ENCODE measurements at regions of chr3 and their contacts with region 1.

Region 1: DNA sequence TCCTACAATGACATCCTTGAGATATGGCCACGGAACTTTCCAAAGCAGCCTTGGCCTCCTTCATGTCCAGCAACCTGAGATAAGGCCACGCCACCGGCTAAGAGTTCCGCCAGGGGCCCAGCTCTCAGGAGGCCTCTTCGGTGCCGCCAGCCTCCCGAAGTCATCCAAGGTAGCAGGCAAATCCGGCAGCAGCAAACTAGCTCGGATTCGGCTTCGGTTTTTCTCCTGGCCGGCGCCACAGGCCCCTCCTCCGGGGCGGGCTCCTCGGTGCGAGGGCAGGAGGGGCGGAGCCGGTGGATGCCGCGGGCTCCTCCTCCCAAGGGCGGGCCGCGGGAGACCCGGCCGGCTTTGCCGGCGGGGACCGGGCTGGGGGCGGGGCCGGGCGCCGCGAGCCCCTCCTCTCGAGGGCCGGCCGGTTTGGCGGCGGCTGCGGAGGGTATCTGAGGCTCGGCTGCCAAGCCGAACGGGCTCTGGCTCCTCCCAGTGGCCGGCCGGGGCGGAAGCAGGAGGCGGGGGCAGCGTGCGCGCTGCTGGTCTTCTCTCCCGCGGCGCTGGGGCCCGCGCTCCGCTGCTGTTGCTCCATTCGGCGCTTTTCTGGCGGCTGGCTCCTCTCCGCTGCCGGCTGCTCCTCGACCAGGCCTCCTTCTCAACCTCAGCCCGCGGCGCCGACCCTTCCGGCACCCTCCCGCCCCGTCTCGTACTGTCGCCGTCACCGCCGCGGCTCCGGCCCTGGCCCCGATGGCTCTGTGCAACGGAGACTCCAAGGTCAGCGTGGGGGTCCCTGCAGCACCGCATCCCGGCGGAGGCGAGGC is at the start of gene GMPS:
- DNase-seq: peak; percentile 87 to 98 (median 95)
- ATAC-seq: peak; percentile 91
- H3K4me3 ChIP-seq: peak within 1 kb of the TSS; percentile 69
- H3K4me3 Mint-ChIP-seq: peak within 1 kb of the TSS; percentile 97
- H3K27ac ChIP-seq: peak within 1 kb of the TSS; percentile 79 to 86
- H3K27ac Mint-ChIP-seq: peak within 1 kb of the TSS; percentile 95
- H3K4me1 ChIP-seq: peaks cover 23% of the 10 kb centered on the region
- H3K4me1 Mint-ChIP-seq: peaks cover 32% of the 10 kb centered on the region
- H3K27me3 ChIP-seq: no peaks in the 10 kb centered on the region
- H3K27me3 Mint-ChIP-seq: no peaks in the 10 kb centered on the region
- CTCF ChIP-seq: peak; percentile 47
- total RNA-seq, gene GMPS: 34.1 to 34.3 TPM

Region 2: DNA sequence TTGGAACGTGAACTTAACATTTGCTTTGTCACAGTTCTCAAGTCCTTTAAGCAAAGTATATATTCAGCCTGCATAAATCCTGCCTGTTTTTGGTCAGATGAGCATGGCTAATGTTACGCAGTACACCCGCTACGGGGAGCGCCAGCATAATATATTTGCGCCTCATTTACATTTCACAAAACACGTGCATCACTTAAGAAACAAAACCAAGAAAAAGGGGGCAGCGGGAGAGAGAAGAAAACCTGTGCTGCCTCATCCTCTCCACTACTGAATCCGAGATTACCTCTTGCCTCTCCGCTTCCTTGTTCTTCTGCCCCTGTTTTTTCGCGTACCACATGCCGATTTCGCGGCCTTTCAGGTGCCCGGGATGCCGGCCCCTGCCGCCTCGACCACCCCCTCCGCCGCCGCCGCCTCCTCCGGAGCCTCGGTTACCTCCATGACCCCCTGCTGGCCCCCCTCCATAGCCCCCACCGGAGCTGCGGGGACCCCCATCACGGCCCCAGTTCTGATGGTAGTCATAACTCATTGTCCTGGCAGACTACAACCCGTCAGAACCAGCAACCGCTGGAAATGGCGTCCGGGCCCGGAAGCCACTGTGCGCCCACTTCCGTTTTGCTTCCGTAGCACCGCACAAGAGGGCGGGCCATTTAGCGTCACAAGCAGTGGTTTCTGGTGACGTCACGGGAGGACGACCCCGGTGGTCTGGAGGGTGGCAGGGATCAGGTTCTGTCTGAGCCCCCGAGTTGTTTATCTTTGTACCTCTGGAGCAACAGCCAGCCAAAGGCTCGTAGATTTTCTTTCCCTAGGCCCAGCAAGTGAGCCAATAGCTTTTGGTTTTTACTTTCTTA is 1546.2 kb before region 1 on chr3 and contains the start of gene DHX36:
- CTCF ChIA-PET with region 1: no interaction called
- POLR2A ChIA-PET with region 1: no interaction called
- intact Hi-C with region 1: loop called (anchors 1 to 5 kb)
- DNase-seq: peak; percentile 77 to 95 (median 86)
- ATAC-seq: peak; percentile 89
- H3K4me3 ChIP-seq: peak within 1 kb of the TSS; percentile 84
- H3K4me3 Mint-ChIP-seq: peak within 1 kb of the TSS; percentile 96
- H3K27ac ChIP-seq: peak within 1 kb of the TSS; percentile 96 to 97
- H3K27ac Mint-ChIP-seq: peak within 1 kb of the TSS; percentile 99
- H3K4me1 ChIP-seq: peaks cover 39% of the 10 kb centered on the region
- H3K4me1 Mint-ChIP-seq: peaks cover 16% of the 10 kb centered on the region
- H3K27me3 ChIP-seq: no peaks in the 10 kb centered on the region
- H3K27me3 Mint-ChIP-seq: no peaks in the 10 kb centered on the region
- CTCF ChIP-seq: no peak
- total RNA-seq, gene DHX36: 128 TPM

Region 3: GRCh38 chr3:155744626-155745324 is 125.6 kb before region 1 on chr3 and contains the start of gene PLCH1:
- CTCF ChIA-PET with region 1: no interaction called
- POLR2A ChIA-PET with region 1: no interaction called
- intact Hi-C with region 1: loop called in 1 of 2 experiments (anchors 5 kb)
- DNase-seq: peak in 13 of 14 experiments; percentile 8 to 63 (median 34)
- ATAC-seq: peak; percentile 80
- H3K4me3 ChIP-seq: peak within 1 kb of the TSS; percentile 72
- H3K4me3 Mint-ChIP-seq: peak within 1 kb of the TSS; percentile 94
- H3K27ac ChIP-seq: no peak within 1 kb of the TSS
- H3K27ac Mint-ChIP-seq: peak within 1 kb of the TSS; percentile 60
- H3K4me1 ChIP-seq: peaks cover 23% of the 10 kb centered on the region
- H3K4me1 Mint-ChIP-seq: peaks cover 30% of the 10 kb centered on the region
- H3K27me3 ChIP-seq: peaks cover 20 to 33% of the 10 kb centered on the region in 2 experiments
- H3K27me3 Mint-ChIP-seq: peaks cover 54% of the 10 kb centered on the region
- CTCF ChIP-seq: no peak
- total RNA-seq, gene PLCH1: 0.03 to 0.20 TPM

Region 4: GRCh38 chr3:155854141-155854940 is 16.0 kb before region 1 on chr3 and contains the start of gene SLC33A1:
- CTCF ChIA-PET with region 1: interaction called, 11 read pairs
- POLR2A ChIA-PET with region 1: interaction called, 75 read pairs
- intact Hi-C with region 1: loop called (anchors 1 kb)
- DNase-seq: peak; percentile 96 to 100 (median 98)
- ATAC-seq: peak; percentile 90
- H3K4me3 ChIP-seq: peak within 1 kb of the TSS; percentile 93
- H3K4me3 Mint-ChIP-seq: peak within 1 kb of the TSS; percentile 97
- H3K27ac ChIP-seq: peak within 1 kb of the TSS; percentile 74 to 98
- H3K27ac Mint-ChIP-seq: peak within 1 kb of the TSS; percentile 98
- H3K4me1 ChIP-seq: peaks cover 52% of the 10 kb centered on the region
- H3K4me1 Mint-ChIP-seq: peaks cover 47% of the 10 kb centered on the region
- H3K27me3 ChIP-seq: no peaks in the 10 kb centered on the region
- H3K27me3 Mint-ChIP-seq: no peaks in the 10 kb centered on the region
- CTCF ChIP-seq: peak; percentile 2
- total RNA-seq, gene SLC33A1: 14.6 to 16.4 TPM

Region 5: GRCh38 chr3:156816800-156817645 is 946.7 kb after region 1 on chr3:
- CTCF ChIA-PET with region 1: no interaction called
- POLR2A ChIA-PET with region 1: no interaction called
- intact Hi-C with region 1: loop called in 1 of 2 experiments (anchors 10 kb)
- DNase-seq: peak; percentile 66 to 97 (median 84)
- ATAC-seq: peak; percentile 81
- H3K4me3 ChIP-seq: peak overlapping the region; percentile 74
- H3K4me3 Mint-ChIP-seq: peak overlapping the region; percentile 93
- H3K27ac ChIP-seq: peak overlapping the region; percentile 65 to 74
- H3K27ac Mint-ChIP-seq: peak overlapping the region; percentile 89
- H3K4me1 ChIP-seq: peaks cover 24% of the 10 kb centered on the region
- H3K4me1 Mint-ChIP-seq: peaks cover 38% of the 10 kb centered on the region
- H3K27me3 ChIP-seq: no peaks in the 10 kb centered on the region
- H3K27me3 Mint-ChIP-seq: no peaks in the 10 kb centered on the region
- CTCF ChIP-seq: no peak

Measured in CD4-positive, alpha-beta T cell (primary cell).